CD14-positive monocyte (primary cell): ENCODE measurements at regions of chr6 and their contacts with region 1.

Region 1: GRCh38 chr6:134247231-134247833 is 70.6 kb downstream of the SGK1 start:
- DNase-seq: peak; percentile 46 to 94 (median 87)
- H3K4me3 ChIP-seq: peak overlapping the region in 1 of 3 experiments; percentile 34
- H3K4me3 Mint-ChIP-seq: peak overlapping the region in 1 of 2 donors; percentile 53
- H3K27ac ChIP-seq: peak overlapping the region; percentile 69 to 80
- H3K27ac Mint-ChIP-seq: peak overlapping the region; percentile 90 to 96 (median 94)
- H3K4me1 ChIP-seq: peaks cover 30 to 43% of the 10 kb centered on the region in 2 donors
- H3K4me1 Mint-ChIP-seq: peaks cover 50% of the 10 kb centered on the region
- H3K27me3 ChIP-seq: no peaks in the 10 kb centered on the region
- H3K27me3 Mint-ChIP-seq: peaks cover 0 to 3% (median 0%) of the 10 kb centered on the region in 3 donors
- CTCF ChIP-seq: no peak

Region 2: DNA sequence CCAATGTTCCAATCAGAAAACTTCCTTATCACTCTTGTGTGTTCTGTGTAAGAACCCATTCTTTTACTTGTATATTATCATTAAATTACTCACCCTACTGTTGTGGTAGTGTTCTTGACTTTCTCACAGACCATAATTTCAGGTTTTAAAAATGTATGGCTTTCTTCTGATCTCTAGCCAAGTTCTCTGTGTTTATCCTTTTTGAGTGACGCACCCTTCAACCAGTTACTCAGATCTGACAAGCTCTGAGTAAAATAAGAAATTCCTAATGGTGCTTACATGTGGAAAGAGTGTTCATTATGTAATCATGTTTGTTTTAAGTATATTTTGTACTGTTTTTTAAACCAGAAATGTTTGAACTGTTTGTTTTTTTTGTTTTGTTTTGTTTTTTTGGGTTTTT is 283.3 kb before region 1 on chr6:
- intact Hi-C with region 1: no loop called
- DNase-seq: no peak
- H3K4me3 ChIP-seq: no peak overlapping the region
- H3K4me3 Mint-ChIP-seq: no peak overlapping the region
- H3K27ac ChIP-seq: no peak overlapping the region
- H3K27ac Mint-ChIP-seq: no peak overlapping the region
- H3K4me1 ChIP-seq: peaks cover 3 to 9% of the 10 kb centered on the region in 2 donors
- H3K4me1 Mint-ChIP-seq: peaks cover 20% of the 10 kb centered on the region
- H3K27me3 ChIP-seq: no peaks in the 10 kb centered on the region
- H3K27me3 Mint-ChIP-seq: peaks cover 0 to 3% (median 0%) of the 10 kb centered on the region in 3 donors
- CTCF ChIP-seq: no peak

Region 3: GRCh38 chr6:134288538-134289203 is 41.3 kb after region 1 on chr6:
- intact Hi-C with region 1: loop called in 1 of 2 experiments (anchors 5 kb)
- DNase-seq: peak; percentile 91 to 96 (median 95)
- H3K4me3 ChIP-seq: peak overlapping the region in 1 of 3 experiments; percentile 11
- H3K4me3 Mint-ChIP-seq: peak overlapping the region in 1 of 2 donors; percentile 51
- H3K27ac ChIP-seq: peak overlapping the region; percentile 67 to 95
- H3K27ac Mint-ChIP-seq: peak overlapping the region; percentile 95 to 99 (median 97)
- H3K4me1 ChIP-seq: peaks cover 20 to 23% of the 10 kb centered on the region in 2 donors
- H3K4me1 Mint-ChIP-seq: peaks cover 24% of the 10 kb centered on the region
- H3K27me3 ChIP-seq: no peaks in the 10 kb centered on the region
- H3K27me3 Mint-ChIP-seq: no peaks in the 10 kb centered on the region
- CTCF ChIP-seq: no peak

Region 4: DNA sequence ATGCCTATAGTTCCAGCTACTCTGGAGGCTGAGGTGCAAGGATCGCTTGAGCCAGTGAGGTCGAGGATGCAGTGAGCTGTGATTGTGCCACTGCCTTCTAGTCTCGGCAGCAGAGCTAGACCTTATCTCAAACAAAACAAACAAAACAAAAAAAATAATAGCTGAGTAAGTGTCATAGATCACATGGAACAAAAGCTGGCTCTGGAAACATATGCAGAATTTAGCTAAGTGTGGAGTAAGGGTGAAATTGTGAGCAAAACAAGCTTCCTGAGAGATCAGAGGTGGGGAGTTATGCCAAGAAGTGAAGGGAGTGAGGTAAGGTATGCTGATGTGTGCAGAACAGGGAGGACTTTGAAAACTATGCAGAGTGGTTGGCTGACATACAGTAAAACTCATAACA is 51.9 kb after region 1 on chr6:
- intact Hi-C with region 1: no loop called
- DNase-seq: no peak
- H3K4me3 ChIP-seq: no peak overlapping the region
- H3K4me3 Mint-ChIP-seq: no peak overlapping the region
- H3K27ac ChIP-seq: no peak overlapping the region
- H3K27ac Mint-ChIP-seq: no peak overlapping the region
- H3K4me1 ChIP-seq: peaks cover 27 to 29% of the 10 kb centered on the region in 2 donors
- H3K4me1 Mint-ChIP-seq: peaks cover 29% of the 10 kb centered on the region
- H3K27me3 ChIP-seq: no peaks in the 10 kb centered on the region
- H3K27me3 Mint-ChIP-seq: peaks cover 0 to 2% (median 1%) of the 10 kb centered on the region in 3 donors
- CTCF ChIP-seq: no peak

Region 5: DNA sequence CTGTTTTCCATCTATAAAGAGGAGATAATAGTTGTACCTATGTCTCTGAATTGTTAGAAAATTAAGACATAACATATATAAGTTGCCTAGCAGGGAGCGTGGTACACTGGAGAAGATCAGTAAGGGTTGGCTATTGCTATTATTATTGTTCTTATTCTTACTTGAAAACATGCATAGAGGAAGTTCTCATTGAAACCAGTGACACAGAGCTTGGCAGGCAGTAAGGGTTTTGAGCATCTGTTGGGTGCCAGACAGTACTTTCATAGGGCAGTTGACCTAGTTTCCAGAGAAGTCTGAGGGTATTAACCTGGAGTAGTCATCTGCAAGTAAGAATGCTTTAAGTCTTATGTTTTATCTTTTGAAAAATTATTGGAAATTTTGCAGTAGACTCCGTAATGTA is 83.9 kb after region 1 on chr6:
- intact Hi-C with region 1: no loop called
- DNase-seq: no peak
- H3K4me3 ChIP-seq: no peak overlapping the region
- H3K4me3 Mint-ChIP-seq: no peak overlapping the region
- H3K27ac ChIP-seq: no peak overlapping the region
- H3K27ac Mint-ChIP-seq: no peak overlapping the region
- H3K4me1 ChIP-seq: peaks cover 4 to 9% of the 10 kb centered on the region in 2 donors
- H3K4me1 Mint-ChIP-seq: peaks cover 7% of the 10 kb centered on the region
- H3K27me3 ChIP-seq: no peaks in the 10 kb centered on the region
- H3K27me3 Mint-ChIP-seq: peaks cover 1 to 8% (median 2%) of the 10 kb centered on the region in 3 donors
- CTCF ChIP-seq: no peak